ENCODE measurements at regions of chr1 and their contacts with region 1.

Region 1: DNA sequence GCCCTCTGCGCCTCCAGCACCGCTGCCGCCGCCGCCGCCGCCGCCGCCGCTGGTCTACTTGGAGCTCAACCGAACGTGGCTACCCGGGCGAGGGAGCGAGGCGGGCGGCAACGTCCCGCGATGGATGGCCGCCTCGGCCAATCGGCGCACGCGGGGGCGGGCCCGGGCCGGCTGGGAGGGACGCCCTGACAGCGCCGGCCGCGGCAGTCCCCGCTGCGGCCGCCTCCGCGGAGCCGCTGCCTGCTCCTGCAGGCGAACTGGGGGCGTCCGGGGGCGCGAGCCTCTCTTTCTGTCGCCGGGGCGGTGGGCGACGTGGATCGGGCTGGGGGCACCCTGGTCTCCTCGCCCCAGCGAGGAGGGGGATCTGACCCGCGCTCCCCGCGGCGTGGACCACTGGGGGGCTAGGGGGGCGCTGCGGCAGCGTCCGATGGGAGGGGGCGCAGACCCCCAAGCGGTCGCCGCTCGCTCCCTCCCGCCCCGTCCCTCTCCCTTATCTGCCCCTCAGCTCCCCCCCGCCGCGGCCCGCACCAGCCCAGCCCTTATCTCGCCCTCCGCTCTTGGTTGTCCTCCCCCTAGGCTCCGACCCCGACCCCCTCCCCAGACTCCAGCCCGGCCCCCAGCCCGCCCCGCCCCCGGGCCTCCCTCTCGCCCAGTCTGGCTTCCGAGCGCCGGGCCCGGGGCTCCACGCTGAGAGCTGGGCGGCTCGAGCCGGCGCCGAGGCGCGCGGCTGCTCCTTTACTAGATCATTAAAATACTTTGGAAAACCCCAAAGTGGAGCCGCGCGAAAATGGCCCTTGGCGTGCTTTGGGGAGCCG is at the start of gene SSBP3:
- DNase-seq: peak; percentile 98
- H3K4me3 Mint-ChIP-seq: peak within 1 kb of the TSS; percentile 93
- H3K27ac Mint-ChIP-seq: peak within 1 kb of the TSS; percentile 96
- H3K4me1 Mint-ChIP-seq: peaks cover 64% of the 10 kb centered on the region
- H3K27me3 Mint-ChIP-seq: no peaks in the 10 kb centered on the region
- total RNA-seq, gene SSBP3: 84.1 and 87.9 TPM in 2 replicates

Region 2: DNA sequence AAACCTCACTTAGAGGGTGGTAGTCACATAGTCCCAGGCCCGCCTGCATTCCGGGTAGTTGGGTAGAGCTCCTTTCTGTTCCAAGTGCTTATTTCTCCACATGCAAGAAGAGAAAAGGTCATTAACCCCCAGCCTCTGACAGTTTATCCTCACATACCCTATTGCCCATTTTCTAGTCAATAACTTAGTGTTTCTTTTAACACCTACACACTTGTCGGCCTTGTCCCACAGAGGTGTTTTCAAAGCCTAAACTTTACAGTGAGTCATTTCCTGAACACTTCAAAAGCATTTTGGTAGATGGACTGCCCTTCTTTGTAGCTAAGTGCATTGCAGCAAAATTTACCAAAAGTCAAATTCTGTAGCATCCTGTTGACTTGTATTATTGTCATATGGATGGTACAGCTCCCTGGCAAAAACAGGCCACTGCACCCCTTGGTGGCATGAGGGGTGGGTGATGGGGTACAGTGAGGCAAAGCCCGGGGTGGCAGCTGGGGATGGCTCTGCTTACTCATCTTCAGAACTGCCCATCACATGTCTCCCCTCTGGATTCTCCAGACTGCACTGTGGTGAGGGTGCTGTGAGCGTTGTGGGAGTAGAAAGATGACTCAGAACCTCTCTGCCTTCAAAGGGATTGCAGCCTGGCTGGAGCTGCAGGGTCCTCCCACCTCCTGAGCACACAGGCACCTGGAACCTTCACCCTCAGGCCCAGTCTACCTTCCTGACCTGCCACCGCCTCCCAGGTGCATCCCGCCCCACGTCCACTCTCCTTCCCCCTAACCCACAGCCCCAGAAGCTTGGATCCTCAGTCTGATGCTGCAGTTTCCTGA is 993.2 kb before region 1 on chr1:
- intact Hi-C with region 1: loop called (anchors 10 kb)
- DNase-seq: peak; percentile 91
- H3K4me3 Mint-ChIP-seq: peak overlapping the region; percentile 80
- H3K27ac Mint-ChIP-seq: peak overlapping the region; percentile 96
- H3K4me1 Mint-ChIP-seq: peaks cover 71% of the 10 kb centered on the region
- H3K27me3 Mint-ChIP-seq: no peaks in the 10 kb centered on the region

Region 3: GRCh38 chr1:54070171-54070837 is 336.2 kb before region 1 on chr1:
- intact Hi-C with region 1: loop called (anchors 5 kb)
- DNase-seq: no peak
- H3K4me3 Mint-ChIP-seq: no peak overlapping the region
- H3K27ac Mint-ChIP-seq: no peak overlapping the region
- H3K4me1 Mint-ChIP-seq: no peaks in the 10 kb centered on the region
- H3K27me3 Mint-ChIP-seq: no peaks in the 10 kb centered on the region

Region 4: GRCh38 chr1:54230507-54231339 is 175.8 kb before region 1 on chr1:
- intact Hi-C with region 1: loop called (anchors 2 kb)
- DNase-seq: no peak
- H3K4me3 Mint-ChIP-seq: peak overlapping the region; percentile 8
- H3K27ac Mint-ChIP-seq: peak overlapping the region; percentile 59
- H3K4me1 Mint-ChIP-seq: peaks cover 30% of the 10 kb centered on the region
- H3K27me3 Mint-ChIP-seq: no peaks in the 10 kb centered on the region

Region 5: GRCh38 chr1:54253480-54253879 is 153.1 kb before region 1 on chr1:
- intact Hi-C with region 1: no loop called
- DNase-seq: no peak
- H3K4me3 Mint-ChIP-seq: no peak overlapping the region
- H3K27ac Mint-ChIP-seq: no peak overlapping the region
- H3K4me1 Mint-ChIP-seq: peaks cover 10% of the 10 kb centered on the region
- H3K27me3 Mint-ChIP-seq: no peaks in the 10 kb centered on the region

Region 6: DNA sequence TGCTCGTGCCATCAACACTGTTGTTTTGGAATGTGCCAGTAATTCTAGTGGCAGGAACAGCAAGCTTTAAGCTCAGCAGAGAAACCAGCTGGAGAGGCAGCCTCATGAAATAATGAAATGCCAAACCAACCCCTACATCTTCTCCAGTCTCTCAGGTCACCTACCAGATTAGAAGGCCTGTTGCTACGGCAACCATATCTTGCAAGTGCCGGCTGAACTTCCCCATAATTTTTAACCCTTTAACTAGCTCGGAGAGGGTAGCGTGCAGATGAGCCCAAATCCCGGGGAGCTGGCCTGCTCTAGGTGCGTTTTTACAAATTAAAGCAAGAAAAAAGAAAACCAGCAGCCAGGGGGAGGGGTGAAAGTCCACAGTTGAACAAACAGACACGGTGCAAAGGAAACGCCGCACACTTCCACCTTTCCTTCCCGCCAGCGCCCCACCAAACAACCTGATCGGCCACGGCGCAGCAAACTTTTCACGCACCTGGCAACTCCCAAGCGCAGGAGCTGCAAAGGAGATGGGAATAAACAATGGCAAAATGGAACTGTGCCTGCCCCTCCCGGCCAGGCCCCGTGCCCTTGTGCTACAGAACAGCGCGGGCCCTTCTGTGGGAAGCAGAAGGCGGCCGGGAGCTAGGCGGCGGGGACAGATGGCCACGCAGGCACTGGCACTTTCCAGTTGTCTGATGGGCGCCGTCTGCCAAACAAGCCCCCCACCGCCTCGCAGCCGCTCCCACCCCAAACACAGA is 50.4 kb before region 1 on chr1:
- intact Hi-C with region 1: loop called (anchors 2 kb)
- DNase-seq: peak; percentile 70
- H3K4me3 Mint-ChIP-seq: peak overlapping the region; percentile 81
- H3K27ac Mint-ChIP-seq: peak overlapping the region; percentile 86
- H3K4me1 Mint-ChIP-seq: peaks cover 78% of the 10 kb centered on the region
- H3K27me3 Mint-ChIP-seq: no peaks in the 10 kb centered on the region

Region 7: DNA sequence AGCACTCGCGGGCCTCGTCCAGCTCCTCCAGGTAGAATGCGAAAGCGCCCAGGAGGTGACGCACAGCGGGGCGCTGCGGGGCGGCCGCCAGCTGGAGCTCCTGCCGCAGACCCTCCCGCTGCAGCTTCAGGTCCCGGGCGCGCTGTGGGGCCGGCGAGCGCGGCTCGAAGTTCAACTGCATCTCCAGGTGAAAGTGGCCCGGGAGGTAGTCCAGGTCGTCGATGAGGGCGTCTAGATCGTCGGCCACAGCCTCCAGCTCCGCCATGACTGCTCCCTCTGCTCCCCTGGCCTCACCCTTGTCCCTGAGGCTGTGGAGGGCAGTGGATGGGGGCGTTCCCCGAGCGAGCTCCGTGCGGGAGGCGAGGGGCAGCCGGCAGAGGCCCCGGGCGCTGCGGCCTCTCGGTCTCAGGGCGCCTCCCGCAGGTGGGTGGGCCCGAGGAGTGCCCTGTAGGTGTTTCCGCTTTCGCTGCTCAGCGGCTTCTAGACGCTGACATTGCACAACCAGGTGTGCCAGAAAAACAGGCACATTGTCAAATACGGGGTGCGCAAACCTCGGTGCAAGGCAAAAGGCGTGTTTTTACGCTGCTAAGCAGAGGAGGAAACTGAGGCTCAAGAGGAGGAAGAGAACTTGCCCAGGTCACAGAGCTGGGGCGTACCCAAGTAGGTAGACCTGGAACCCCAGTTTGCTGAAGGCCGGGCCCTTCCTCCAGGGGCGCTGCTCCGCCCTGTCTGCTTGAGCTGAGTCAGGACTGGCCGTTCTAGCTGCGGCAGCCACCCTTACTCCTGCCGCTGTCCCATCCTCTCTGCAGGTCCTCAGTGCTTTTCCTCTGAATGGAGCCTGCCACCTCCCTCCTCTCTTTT is 394.6 kb after region 1 on chr1 and contains the start of gene TTC22:
- intact Hi-C with region 1: loop called (anchors 5 kb)
- DNase-seq: peak; percentile 91
- H3K4me3 Mint-ChIP-seq: peak within 1 kb of the TSS; percentile 87
- H3K27ac Mint-ChIP-seq: peak within 1 kb of the TSS; percentile 81
- H3K4me1 Mint-ChIP-seq: peaks cover 54% of the 10 kb centered on the region
- H3K27me3 Mint-ChIP-seq: no peaks in the 10 kb centered on the region
- total RNA-seq, gene TTC22: 1.6 TPM in 2 replicates

Measured in activated CD4-positive, alpha-beta T cell treated with anti-CD3 and anti-CD28 coated beads, Interleukin-2, amount 10 ng/mL, durations not matched to agents 24 days and 14 days (primary cell).